Right ventricle myocardium superior (tissue), 1 donor: ENCODE measurements at regions of chr2 and their contacts with region 1.

Region 1: GRCh38 chr2:207710814-207711740 is at the start of gene CCNYL1:
- DNase-seq: peak; percentile 99
- ATAC-seq: peak; percentile 99
- total RNA-seq, gene CCNYL1: 8.9 TPM

Region 2: GRCh38 chr2:207432453-207432852 is 278.6 kb before region 1 on chr2:
- intact Hi-C with region 1: no loop called
- DNase-seq: no peak
- ATAC-seq: no peak

Region 3: DNA sequence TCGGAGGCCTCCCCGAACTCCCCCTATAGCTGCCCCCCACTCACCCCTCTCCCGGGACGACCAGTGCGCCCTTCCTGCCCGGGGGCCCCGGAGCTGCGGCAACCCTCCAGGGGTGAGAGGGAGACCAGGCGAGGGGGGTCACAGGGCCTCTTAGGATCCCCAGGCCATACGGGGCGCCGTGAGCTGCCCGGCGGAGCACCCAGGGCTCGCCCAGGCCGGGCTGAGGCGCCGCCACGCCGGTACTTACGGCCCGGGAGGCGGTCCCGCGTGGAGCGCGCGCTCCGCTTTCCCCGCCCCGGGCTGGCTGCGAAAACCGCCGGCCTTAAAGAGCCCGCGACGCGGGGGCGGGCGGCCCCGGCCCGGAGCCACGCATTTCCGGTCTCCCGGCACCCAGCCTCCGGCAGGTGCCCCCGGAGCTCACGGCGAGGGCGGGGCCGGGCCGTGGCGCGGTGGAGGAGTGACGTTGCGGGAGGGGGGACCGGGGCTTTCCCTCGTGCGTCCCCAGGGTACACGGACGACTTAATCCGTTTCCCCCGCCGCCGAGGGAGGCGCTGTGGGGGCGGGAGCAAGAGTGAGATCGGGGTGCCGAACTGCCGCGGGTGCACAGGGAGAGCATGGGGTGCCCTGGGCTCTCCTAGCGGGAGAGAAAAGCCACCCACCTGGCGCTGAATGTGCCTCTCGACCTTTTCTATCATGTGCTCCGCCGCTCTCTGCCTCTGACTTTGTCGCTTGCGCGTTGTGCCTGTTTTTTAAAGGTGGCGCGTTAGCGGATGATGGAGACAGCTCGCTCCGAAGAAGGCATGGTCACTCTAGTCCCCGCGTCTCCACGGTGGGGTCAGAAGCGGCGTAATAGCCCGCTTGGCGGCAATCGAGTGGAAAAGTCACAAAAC is 85.8 kb before region 1 on chr2 and contains the start of gene METTL21A:
- intact Hi-C with region 1: loop called (anchors 10 kb)
- DNase-seq: peak; percentile 94
- ATAC-seq: peak; percentile 94
- total RNA-seq, gene METTL21A: 14.8 TPM